Activated naive CD8-positive, alpha-beta T cell treated with anti-CD3 and anti-CD28 coated beads, Interleukin-2, amount 10 ng/mL, durations not matched to agents 7 days and 5 days (primary cell): ENCODE measurements at regions of chr1 and their contacts with region 1.

Region 1: GRCh38 chr1:113928941-113929749 is at the start of gene HIPK1:
- DNase-seq: peak; percentile 94
- ATAC-seq: peak; percentile 66
- H3K4me3 Mint-ChIP-seq: peak within 1 kb of the TSS; percentile 97
- H3K27ac Mint-ChIP-seq: peak within 1 kb of the TSS; percentile 99
- H3K4me1 Mint-ChIP-seq: peaks cover 39% of the 10 kb centered on the region
- H3K27me3 Mint-ChIP-seq: no peaks in the 10 kb centered on the region
- total RNA-seq, gene HIPK1: 93.0 to 99.4 TPM

Region 2: DNA sequence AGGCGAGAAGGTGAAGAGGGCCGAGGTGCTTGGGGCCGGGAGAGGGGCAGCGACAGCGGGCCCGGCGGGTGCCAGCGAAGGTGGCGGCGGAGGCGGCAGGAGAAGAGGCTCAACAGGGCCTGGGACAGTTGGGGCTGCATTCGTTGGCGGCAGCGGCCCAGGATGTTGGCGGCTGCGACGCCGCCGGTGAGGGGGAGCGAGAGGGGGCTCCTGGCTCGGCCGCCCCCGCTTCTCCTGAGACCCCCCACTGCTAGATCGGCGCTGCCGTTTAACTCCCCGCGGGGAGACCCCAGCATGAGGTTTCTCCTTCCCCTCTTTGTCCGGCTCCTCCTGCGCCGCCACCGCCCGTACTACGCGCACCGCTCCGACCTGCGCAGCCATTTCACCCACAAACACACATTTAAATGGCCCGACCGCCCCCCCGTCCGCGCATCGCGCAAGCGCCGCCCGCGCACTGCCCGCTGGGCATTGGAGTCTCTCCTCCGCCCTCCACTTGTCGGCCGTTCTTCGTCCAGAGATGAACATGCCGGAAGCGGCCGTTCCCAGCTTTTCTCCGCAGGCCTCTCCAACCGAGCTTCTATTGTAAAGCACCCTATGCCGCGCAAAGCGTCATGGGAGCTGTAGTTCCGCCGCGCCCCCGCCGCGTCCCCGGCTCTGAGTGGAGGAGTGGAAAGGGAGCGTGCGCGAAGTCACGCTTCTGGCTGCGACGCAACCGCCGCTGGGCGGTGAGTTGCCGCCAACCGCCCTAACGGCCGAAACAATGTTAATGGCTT is 117.1 kb before region 1 on chr1 and contains the start of gene RSBN1:
- POLR2A ChIA-PET with region 1: interaction called, 24 read pairs
- DNase-seq: peak; percentile 96
- ATAC-seq: peak; percentile 97
- H3K4me3 Mint-ChIP-seq: peak within 1 kb of the TSS; percentile 99
- H3K27ac Mint-ChIP-seq: peak within 1 kb of the TSS; percentile 98
- H3K4me1 Mint-ChIP-seq: peaks cover 19% of the 10 kb centered on the region
- H3K27me3 Mint-ChIP-seq: no peaks in the 10 kb centered on the region
- total RNA-seq, gene RSBN1: 32.7 to 37.0 TPM

Region 3: GRCh38 chr1:113904674-113905434 is 24.3 kb before region 1 on chr1 and contains the starts of genes AP4B1 and DCLRE1B:
- POLR2A ChIA-PET with region 1: interaction called, 148 read pairs
- DNase-seq: peak; percentile 97
- ATAC-seq: peak; percentile 89
- H3K4me3 Mint-ChIP-seq: peak within 1 kb of the TSS; percentile 99
- H3K27ac Mint-ChIP-seq: peak within 1 kb of the TSS; percentile 91
- H3K4me1 Mint-ChIP-seq: peaks cover 48% of the 10 kb centered on the region
- H3K27me3 Mint-ChIP-seq: no peaks in the 10 kb centered on the region
- total RNA-seq, gene AP4B1: 53.9 to 60.5 TPM
- total RNA-seq, gene DCLRE1B: 13.4 to 14.3 TPM

Region 4: DNA sequence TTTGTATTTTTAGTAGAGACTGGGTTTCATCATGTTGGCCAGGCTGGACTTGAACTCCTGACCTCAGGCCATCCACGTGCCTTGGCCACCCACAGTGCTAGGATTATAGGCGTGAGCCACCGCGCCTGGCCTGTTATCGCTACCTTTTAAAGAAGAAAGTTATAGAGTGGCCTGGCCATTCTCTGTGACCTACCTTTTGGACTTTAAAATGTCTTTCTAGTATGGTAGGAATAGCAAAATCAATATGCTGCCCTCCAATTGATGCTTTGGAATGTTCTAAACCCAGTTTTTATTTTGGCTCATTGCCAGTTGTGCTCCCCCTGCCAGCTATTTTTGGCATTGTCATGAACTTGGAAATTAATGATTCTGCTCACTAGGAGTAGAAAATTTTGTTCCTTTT is 19.9 kb after region 1 on chr1:
- POLR2A ChIA-PET with region 1: interaction called, 82 read pairs
- DNase-seq: no peak
- ATAC-seq: no peak
- H3K4me3 Mint-ChIP-seq: no peak overlapping the region
- H3K27ac Mint-ChIP-seq: peak overlapping the region; percentile 92
- H3K4me1 Mint-ChIP-seq: peaks cover 45% of the 10 kb centered on the region
- H3K27me3 Mint-ChIP-seq: no peaks in the 10 kb centered on the region

Region 5: GRCh38 chr1:113976609-113977278 is 47.6 kb after region 1 on chr1:
- POLR2A ChIA-PET with region 1: interaction called, 15 read pairs
- DNase-seq: no peak
- ATAC-seq: no peak
- H3K4me3 Mint-ChIP-seq: no peak overlapping the region
- H3K27ac Mint-ChIP-seq: no peak overlapping the region
- H3K4me1 Mint-ChIP-seq: peaks cover 36% of the 10 kb centered on the region
- H3K27me3 Mint-ChIP-seq: no peaks in the 10 kb centered on the region

Region 6: GRCh38 chr1:114093624-114094376 is 164.7 kb after region 1 on chr1:
- POLR2A ChIA-PET with region 1: no interaction called
- DNase-seq: no peak
- ATAC-seq: no peak
- H3K4me3 Mint-ChIP-seq: no peak overlapping the region
- H3K27ac Mint-ChIP-seq: no peak overlapping the region
- H3K4me1 Mint-ChIP-seq: peaks cover 2% of the 10 kb centered on the region
- H3K27me3 Mint-ChIP-seq: peaks cover 13% of the 10 kb centered on the region